CD4-positive, alpha-beta T cell (primary cell): ENCODE measurements at regions of chr3 and their contacts with region 1.

Region 1: DNA sequence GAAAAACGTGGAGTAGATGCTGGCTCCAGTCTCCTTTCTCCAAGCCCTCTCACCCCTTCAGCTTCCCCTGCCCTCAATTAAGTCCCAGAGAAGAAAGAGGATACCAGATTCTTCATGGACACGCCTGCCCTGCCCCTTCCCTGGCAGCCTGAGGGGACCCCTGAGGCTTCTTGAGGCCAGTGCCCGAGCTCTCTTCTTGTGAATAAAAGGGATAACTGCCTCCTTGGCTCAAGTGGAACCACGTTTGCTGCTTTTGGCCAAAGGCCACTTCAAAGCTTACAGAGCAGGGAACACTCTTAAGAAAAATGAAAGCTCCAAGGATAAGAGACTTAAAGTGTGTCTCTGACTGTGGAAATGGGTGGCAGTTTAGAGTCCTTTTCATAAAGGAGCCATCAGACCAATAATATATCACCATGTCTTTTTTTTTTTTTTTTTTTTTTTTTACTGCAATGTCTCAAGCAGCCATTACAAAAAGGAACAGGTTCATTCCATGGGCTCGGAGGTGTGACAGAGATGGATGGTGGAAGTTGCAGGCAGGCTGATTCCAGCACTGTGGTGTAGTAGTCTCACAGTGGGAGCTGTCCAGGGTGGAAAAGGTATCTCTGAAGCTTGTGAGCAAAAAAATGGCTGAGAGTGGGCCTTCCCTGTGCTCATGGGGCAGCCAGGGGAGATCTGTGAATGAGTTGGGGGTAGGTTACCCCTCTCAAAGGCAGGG is 108.8 kb downstream of the SEMA5B start:
- DNase-seq: no peak
- ATAC-seq: no peak
- H3K4me3 ChIP-seq: no peak overlapping the region
- H3K4me3 Mint-ChIP-seq: no peak overlapping the region
- H3K27ac ChIP-seq: no peak overlapping the region
- H3K27ac Mint-ChIP-seq: no peak overlapping the region
- H3K4me1 ChIP-seq: peaks cover 12% of the 10 kb centered on the region
- H3K4me1 Mint-ChIP-seq: peaks cover 12% of the 10 kb centered on the region
- H3K27me3 ChIP-seq: peaks cover 17% of the 10 kb centered on the region in 2 experiments
- H3K27me3 Mint-ChIP-seq: peaks cover 32% of the 10 kb centered on the region
- CTCF ChIP-seq: no peak

Region 2: GRCh38 chr3:122890077-122890719 is 28.5 kb before region 1 on chr3:
- CTCF ChIA-PET with region 1: no interaction called
- POLR2A ChIA-PET with region 1: no interaction called
- intact Hi-C with region 1: no loop called
- DNase-seq: no peak
- ATAC-seq: no peak
- H3K4me3 ChIP-seq: no peak overlapping the region
- H3K4me3 Mint-ChIP-seq: no peak overlapping the region
- H3K27ac ChIP-seq: no peak overlapping the region
- H3K27ac Mint-ChIP-seq: no peak overlapping the region
- H3K4me1 ChIP-seq: peaks cover 4% of the 10 kb centered on the region
- H3K4me1 Mint-ChIP-seq: peaks cover 8% of the 10 kb centered on the region
- H3K27me3 ChIP-seq: no peaks in the 10 kb centered on the region
- H3K27me3 Mint-ChIP-seq: no peaks in the 10 kb centered on the region
- CTCF ChIP-seq: no peak

Region 3: DNA sequence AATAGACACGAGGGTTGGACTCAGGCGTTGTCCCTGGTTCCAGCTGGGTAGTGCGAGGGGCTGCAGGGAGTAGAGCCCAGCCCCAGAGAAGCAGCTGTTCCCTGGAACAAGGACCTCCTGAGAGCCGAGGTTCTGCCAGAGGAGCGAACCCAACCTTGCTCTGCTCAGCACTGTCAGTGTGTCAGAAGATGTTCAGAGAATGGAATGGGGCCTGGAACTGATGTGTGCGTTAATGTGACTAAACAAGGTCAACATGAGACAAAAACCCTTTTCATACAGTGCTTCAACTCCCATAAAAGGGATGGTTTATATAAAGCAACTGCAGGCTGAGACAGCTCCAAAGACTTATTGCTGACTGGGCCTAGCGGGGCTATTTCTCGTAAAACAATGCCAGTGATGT is 701.6 kb after region 1 on chr3:
- CTCF ChIA-PET with region 1: no interaction called
- POLR2A ChIA-PET with region 1: no interaction called
- intact Hi-C with region 1: loop called in 1 of 2 experiments (anchors 10 kb)
- DNase-seq: no peak
- ATAC-seq: no peak
- H3K4me3 ChIP-seq: no peak overlapping the region
- H3K4me3 Mint-ChIP-seq: no peak overlapping the region
- H3K27ac ChIP-seq: no peak overlapping the region
- H3K27ac Mint-ChIP-seq: no peak overlapping the region
- H3K4me1 ChIP-seq: no peaks in the 10 kb centered on the region
- H3K4me1 Mint-ChIP-seq: no peaks in the 10 kb centered on the region
- H3K27me3 ChIP-seq: no peaks in the 10 kb centered on the region
- H3K27me3 Mint-ChIP-seq: no peaks in the 10 kb centered on the region
- CTCF ChIP-seq: no peak